Ovary (tissue), 10 donors: ENCODE measurements at regions of chrX and their contacts with region 1.

Region 1: GRCh38 chrX:107968623-107969022 is 13.5 kb downstream of the TEX13B start:
- DNase-seq: no peak
- H3K4me3 ChIP-seq: no peak overlapping the region
- H3K27ac ChIP-seq: no peak overlapping the region
- H3K4me1 ChIP-seq: no peaks in the 10 kb centered on the region
- H3K27me3 ChIP-seq: no peaks in the 10 kb centered on the region
- CTCF ChIP-seq: no peak
- EP300 ChIP-seq: no peak
- POLR2A ChIP-seq: no peak

Region 2: GRCh38 chrX:108312938-108313337 is 344.3 kb after region 1 on chrX:
- intact Hi-C with region 1: loop called in 1 of 4 experiments (anchors 5 kb)
- DNase-seq: no peak
- H3K4me3 ChIP-seq: no peak overlapping the region
- H3K27ac ChIP-seq: no peak overlapping the region
- H3K4me1 ChIP-seq: no peaks in the 10 kb centered on the region
- H3K27me3 ChIP-seq: no peaks in the 10 kb centered on the region
- CTCF ChIP-seq: no peak
- EP300 ChIP-seq: no peak
- POLR2A ChIP-seq: no peak